Spleen (tissue), 13 donors: ENCODE measurements at regions of chr1 and their contacts with region 1.

Region 1: GRCh38 chr1:205711104-205712020 is 31.1 kb upstream of the SLC45A3 start:
- DNase-seq: no peak
- H3K4me3 ChIP-seq: no peak overlapping the region
- H3K27ac ChIP-seq: peak overlapping the region in 1 of 8 donors; percentile 24
- H3K4me1 ChIP-seq: peaks cover 2 to 80% (median 25%) of the 10 kb centered on the region in 6 donors
- H3K27me3 ChIP-seq: no peaks in the 10 kb centered on the region
- CTCF ChIP-seq: peak; percentile 71 to 90 (median 82)
- POLR2A ChIP-seq: no peak

Region 2: GRCh38 chr1:205658943-205659581 is 52.3 kb before region 1 on chr1:
- intact Hi-C with region 1: loop called (anchors 2 kb)
- DNase-seq: peak; percentile 93
- H3K4me3 ChIP-seq: no peak overlapping the region
- H3K27ac ChIP-seq: peak overlapping the region in 3 of 8 donors; percentile 26 to 56 (median 43)
- H3K4me1 ChIP-seq: peaks cover 7 to 66% (median 35%) of the 10 kb centered on the region in 6 donors
- H3K27me3 ChIP-seq: no peaks in the 10 kb centered on the region
- CTCF ChIP-seq: peak; percentile 75 to 93 (median 90)
- POLR2A ChIP-seq: no peak